Activated CD4-positive, alpha-beta memory T cell treated with anti-CD3 and anti-CD28 coated beads for 36 hours (primary cell): ENCODE measurements at regions of chr5 and their contacts with region 1.

Region 1: GRCh38 chr5:134586866-134587524 is 45.6 kb downstream of the SAR1B start:
- DNase-seq: peak; percentile 92
- H3K4me3 Mint-ChIP-seq: no peak overlapping the region
- H3K27ac Mint-ChIP-seq: peak overlapping the region; percentile 16
- H3K4me1 Mint-ChIP-seq: peaks cover 16% of the 10 kb centered on the region
- H3K27me3 Mint-ChIP-seq: no peaks in the 10 kb centered on the region

Region 2: DNA sequence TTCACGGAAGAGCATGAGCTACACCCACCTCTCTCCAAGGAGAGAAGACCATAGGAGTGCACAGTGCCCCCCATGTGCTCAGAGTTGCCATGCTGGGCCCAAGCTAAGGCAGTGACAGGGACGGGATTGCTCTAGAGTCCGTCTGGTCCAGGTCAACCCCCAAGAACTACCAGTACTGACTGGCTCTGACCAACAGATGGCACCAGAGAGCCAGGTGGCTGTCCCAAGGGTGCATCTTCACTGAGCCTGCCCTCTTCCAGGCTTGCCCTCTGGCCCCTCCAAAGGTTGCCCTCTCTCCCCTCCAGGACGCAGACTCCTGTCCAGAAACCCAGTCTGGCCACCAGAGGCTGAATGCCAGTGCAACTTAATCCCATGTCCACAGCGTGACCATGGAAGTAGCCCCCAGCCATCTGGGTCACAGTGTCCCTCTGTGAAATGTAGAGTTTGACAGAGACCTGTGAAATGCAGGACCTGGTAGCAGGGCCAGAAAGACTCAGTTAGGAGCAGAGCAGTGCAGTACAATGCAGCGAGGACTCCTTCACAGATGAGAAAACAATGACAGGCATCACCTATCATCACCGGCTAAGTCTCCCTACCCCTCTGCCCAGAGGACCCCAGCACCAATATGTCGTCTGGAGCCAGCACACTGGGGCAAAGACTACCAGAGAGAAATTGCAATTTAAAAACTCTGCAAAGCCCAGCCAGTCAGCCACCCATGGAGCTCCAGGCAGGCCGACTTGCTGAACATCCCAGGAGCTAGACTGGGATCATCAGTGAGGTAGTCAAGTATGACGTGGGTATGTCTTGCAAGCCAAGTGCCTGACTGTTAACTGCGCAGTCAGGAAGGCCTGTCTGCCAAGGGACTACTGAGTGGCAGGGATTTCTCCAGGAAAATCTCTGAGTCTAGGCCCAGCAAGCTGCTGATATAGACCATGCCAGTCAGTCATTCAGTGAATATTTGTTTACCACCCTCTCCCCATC is 402.6 kb before region 1 on chr5:
- CTCF ChIA-PET with region 1: interaction called, 13 read pairs
- POLR2A ChIA-PET with region 1: no interaction called
- intact Hi-C with region 1: loop called (anchors 2 kb)
- DNase-seq: peak; percentile 86
- H3K4me3 Mint-ChIP-seq: no peak overlapping the region
- H3K27ac Mint-ChIP-seq: no peak overlapping the region
- H3K4me1 Mint-ChIP-seq: no peaks in the 10 kb centered on the region
- H3K27me3 Mint-ChIP-seq: no peaks in the 10 kb centered on the region

Region 3: GRCh38 chr5:134312796-134313195 is 274.2 kb before region 1 on chr5:
- CTCF ChIA-PET with region 1: interaction called, 16 read pairs
- POLR2A ChIA-PET with region 1: no interaction called
- intact Hi-C with region 1: no loop called
- DNase-seq: no peak
- H3K4me3 Mint-ChIP-seq: no peak overlapping the region
- H3K27ac Mint-ChIP-seq: no peak overlapping the region
- H3K4me1 Mint-ChIP-seq: peaks cover 2% of the 10 kb centered on the region
- H3K27me3 Mint-ChIP-seq: no peaks in the 10 kb centered on the region

Region 4: DNA sequence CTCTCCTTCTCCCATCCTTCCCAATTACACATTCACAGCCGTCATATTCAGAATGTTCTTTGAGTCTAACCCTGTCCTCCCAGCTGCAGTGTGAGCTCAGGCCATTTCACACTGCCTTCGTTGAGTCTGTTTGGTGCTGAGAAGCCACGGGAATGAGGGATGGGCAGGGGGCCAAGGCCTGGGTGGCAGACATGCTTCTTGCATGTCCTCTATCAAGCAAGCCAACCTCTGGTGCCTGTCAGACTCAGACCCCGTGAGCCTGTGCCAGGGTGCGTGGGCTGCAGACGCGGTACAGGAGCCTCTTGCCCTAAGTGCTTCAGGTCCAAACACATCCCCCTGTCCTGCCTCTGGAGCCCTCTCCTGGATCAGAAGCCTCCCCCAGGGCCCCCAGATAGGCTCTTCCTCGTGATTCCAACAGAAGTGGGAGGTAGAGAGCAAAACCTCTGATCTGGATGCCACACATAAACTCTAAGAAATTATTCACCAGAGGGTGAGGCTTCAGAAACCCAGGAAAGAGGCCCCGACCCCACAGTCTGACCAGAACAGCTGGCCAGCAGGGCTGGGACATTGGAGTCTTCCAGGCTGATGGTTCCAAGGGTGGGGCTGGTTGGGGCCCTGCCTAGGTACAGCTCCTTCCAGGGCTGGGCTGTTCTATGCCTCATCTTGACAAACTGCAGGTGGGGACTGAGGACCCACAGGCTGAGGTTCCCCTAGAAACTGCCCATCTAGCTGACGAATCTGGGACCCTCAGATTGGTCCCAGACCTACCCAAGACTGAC is 128.6 kb before region 1 on chr5:
- CTCF ChIA-PET with region 1: no interaction called
- POLR2A ChIA-PET with region 1: no interaction called
- intact Hi-C with region 1: no loop called
- DNase-seq: no peak
- H3K4me3 Mint-ChIP-seq: no peak overlapping the region
- H3K27ac Mint-ChIP-seq: no peak overlapping the region
- H3K4me1 Mint-ChIP-seq: no peaks in the 10 kb centered on the region
- H3K27me3 Mint-ChIP-seq: no peaks in the 10 kb centered on the region

Region 5: GRCh38 chr5:134533115-134533815 is 53.7 kb before region 1 on chr5:
- CTCF ChIA-PET with region 1: interaction called, 48 read pairs
- POLR2A ChIA-PET with region 1: no interaction called
- intact Hi-C with region 1: no loop called
- DNase-seq: no peak
- H3K4me3 Mint-ChIP-seq: no peak overlapping the region
- H3K27ac Mint-ChIP-seq: no peak overlapping the region
- H3K4me1 Mint-ChIP-seq: peaks cover 86% of the 10 kb centered on the region
- H3K27me3 Mint-ChIP-seq: no peaks in the 10 kb centered on the region

Region 6: GRCh38 chr5:134603059-134603458 is 16.1 kb after region 1 on chr5:
- CTCF ChIA-PET with region 1: interaction called, 39 read pairs
- POLR2A ChIA-PET with region 1: interaction called, 4 read pairs
- intact Hi-C with region 1: loop called (anchors 1 kb)
- DNase-seq: no peak
- H3K4me3 Mint-ChIP-seq: no peak overlapping the region
- H3K27ac Mint-ChIP-seq: peak overlapping the region; percentile 45
- H3K4me1 Mint-ChIP-seq: peaks cover 58% of the 10 kb centered on the region
- H3K27me3 Mint-ChIP-seq: no peaks in the 10 kb centered on the region

Region 7: GRCh38 chr5:134637161-134637582 is 50.2 kb after region 1 on chr5:
- CTCF ChIA-PET with region 1: interaction called, 14 read pairs
- POLR2A ChIA-PET with region 1: no interaction called
- intact Hi-C with region 1: no loop called
- DNase-seq: no peak
- H3K4me3 Mint-ChIP-seq: no peak overlapping the region
- H3K27ac Mint-ChIP-seq: no peak overlapping the region
- H3K4me1 Mint-ChIP-seq: peaks cover 8% of the 10 kb centered on the region
- H3K27me3 Mint-ChIP-seq: no peaks in the 10 kb centered on the region

Region 8: GRCh38 chr5:134738133-134738962 is 151.4 kb after region 1 on chr5 and contains the start of gene CAMLG:
- CTCF ChIA-PET with region 1: interaction called, 11 read pairs
- POLR2A ChIA-PET with region 1: no interaction called
- intact Hi-C with region 1: loop called (anchors 2 kb)
- DNase-seq: peak; percentile 98
- H3K4me3 Mint-ChIP-seq: peak within 1 kb of the TSS; percentile 95
- H3K27ac Mint-ChIP-seq: peak within 1 kb of the TSS; percentile 89
- H3K4me1 Mint-ChIP-seq: peaks cover 24% of the 10 kb centered on the region
- H3K27me3 Mint-ChIP-seq: no peaks in the 10 kb centered on the region
- total RNA-seq, gene CAMLG: 40.3 to 41.2 TPM

Region 9: GRCh38 chr5:134891473-134891872 is 304.5 kb after region 1 on chr5:
- CTCF ChIA-PET with region 1: no interaction called
- POLR2A ChIA-PET with region 1: no interaction called
- intact Hi-C with region 1: no loop called
- DNase-seq: no peak
- H3K4me3 Mint-ChIP-seq: no peak overlapping the region
- H3K27ac Mint-ChIP-seq: no peak overlapping the region
- H3K4me1 Mint-ChIP-seq: peaks cover 13% of the 10 kb centered on the region
- H3K27me3 Mint-ChIP-seq: no peaks in the 10 kb centered on the region